ENCODE measurements at regions of chr11 and their contacts with region 1.

Region 1: DNA sequence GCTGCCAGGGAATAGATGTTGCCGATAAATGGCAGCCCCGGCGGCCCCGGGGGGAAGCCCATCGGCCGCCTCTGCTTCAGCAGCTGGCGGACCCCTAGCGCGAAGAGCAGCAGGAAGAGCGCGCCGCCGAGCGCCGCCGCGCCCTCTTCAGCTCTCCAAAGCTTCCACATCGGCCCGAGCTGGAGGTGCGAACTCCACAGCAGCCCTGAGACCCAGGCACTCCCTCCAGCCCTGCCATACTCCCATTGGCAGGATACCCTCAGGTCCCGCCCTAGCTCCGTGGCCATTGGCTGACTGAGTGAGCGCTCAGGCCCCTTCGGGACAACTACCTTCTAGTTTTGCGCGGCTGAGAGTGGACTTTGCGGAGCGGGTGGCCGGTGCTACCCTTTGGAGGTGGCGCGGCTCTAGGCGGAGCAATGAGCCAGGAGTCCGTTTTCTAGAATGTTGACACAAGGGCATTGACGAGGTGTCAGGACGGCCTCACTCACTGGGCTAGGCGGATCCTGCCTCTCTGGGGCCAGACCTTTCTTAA is at the start of gene CYP2R1:
- DNase-seq: peak; percentile 95
- H3K4me3 Mint-ChIP-seq: peak within 1 kb of the TSS; percentile 86
- H3K27ac Mint-ChIP-seq: peak within 1 kb of the TSS; percentile 98
- H3K4me1 Mint-ChIP-seq: peaks cover 52% of the 10 kb centered on the region
- H3K27me3 Mint-ChIP-seq: no peaks in the 10 kb centered on the region
- total RNA-seq, gene CYP2R1: 12.0 to 12.6 TPM

Region 2: DNA sequence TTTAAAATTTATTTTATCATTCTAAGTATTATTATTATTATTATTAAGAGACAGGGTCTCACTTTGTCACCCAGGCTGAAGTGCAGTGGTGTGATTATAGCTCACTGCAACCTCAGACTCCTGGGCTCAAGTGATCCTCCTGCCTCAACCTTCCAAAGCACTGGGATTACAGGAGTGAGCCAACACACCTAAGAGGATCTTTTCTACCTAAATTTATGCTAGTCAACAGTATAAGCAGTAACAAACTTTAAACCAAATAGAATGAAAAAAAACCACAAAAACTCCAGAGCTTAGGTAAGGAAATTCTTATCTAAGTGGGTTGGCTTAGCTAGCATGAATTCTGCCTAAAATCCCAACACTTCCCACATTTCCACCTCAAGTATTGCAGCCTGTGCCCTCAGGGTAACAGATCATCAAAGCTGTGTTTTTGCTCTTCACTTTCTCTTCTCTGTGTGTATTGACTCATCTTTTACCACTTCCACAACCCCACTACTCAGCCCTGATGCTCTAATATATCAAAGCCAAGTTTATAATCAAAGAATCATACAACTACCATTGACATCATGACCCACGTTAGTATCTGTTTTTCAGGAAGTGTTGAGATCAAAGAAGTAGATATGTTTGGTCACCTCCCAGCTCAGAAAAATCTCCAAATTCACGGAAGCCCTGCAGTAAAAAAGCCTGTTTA is 1023.2 kb before region 1 on chr11:
- CTCF ChIA-PET with region 1: no interaction called
- intact Hi-C with region 1: loop called (anchors 5 kb)
- DNase-seq: peak; percentile 61
- H3K4me3 Mint-ChIP-seq: peak overlapping the region; percentile 42
- H3K27ac Mint-ChIP-seq: peak overlapping the region; percentile 91
- H3K4me1 Mint-ChIP-seq: peaks cover 41% of the 10 kb centered on the region
- H3K27me3 Mint-ChIP-seq: no peaks in the 10 kb centered on the region

Region 3: GRCh38 chr11:14443638-14444037 is 448.5 kb before region 1 on chr11:
- CTCF ChIA-PET with region 1: no interaction called
- intact Hi-C with region 1: loop called (anchors 1 kb)
- DNase-seq: no peak
- H3K4me3 Mint-ChIP-seq: no peak overlapping the region
- H3K27ac Mint-ChIP-seq: no peak overlapping the region
- H3K4me1 Mint-ChIP-seq: peaks cover 46% of the 10 kb centered on the region
- H3K27me3 Mint-ChIP-seq: no peaks in the 10 kb centered on the region

Region 4: DNA sequence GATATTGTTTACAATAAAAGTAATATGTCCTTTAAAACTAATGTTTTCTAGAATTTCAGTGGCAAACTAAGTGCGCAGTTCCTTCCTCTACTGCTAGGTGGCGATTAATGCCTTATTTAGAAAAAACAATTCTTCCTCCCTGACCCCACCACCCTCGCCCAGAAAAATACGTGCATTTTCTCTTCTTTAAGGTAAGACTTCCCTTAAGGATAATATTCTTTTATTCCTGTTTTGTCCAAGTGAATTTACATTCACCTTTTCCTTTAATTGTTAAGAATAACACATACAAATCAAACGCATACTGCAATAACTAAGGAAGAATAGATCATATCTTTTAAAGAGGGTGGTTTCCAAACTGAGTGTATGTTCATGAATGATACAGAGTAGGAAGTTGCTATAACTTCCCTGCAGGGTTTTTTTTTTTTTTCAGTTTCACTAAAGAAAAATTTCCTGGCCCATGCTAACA is 354.9 kb before region 1 on chr11:
- CTCF ChIA-PET with region 1: interaction called, 3 read pairs
- intact Hi-C with region 1: loop called (anchors 1 kb)
- DNase-seq: peak; percentile 66
- H3K4me3 Mint-ChIP-seq: peak overlapping the region; percentile 68
- H3K27ac Mint-ChIP-seq: peak overlapping the region; percentile 90
- H3K4me1 Mint-ChIP-seq: peaks cover 32% of the 10 kb centered on the region
- H3K27me3 Mint-ChIP-seq: no peaks in the 10 kb centered on the region

Region 5: GRCh38 chr11:14643697-14644225 is 248.3 kb before region 1 on chr11 and contains the start of gene PDE3B:
- CTCF ChIA-PET with region 1: interaction called, 3 read pairs
- intact Hi-C with region 1: loop called (anchors 1 kb)
- DNase-seq: peak; percentile 85
- H3K4me3 Mint-ChIP-seq: peak within 1 kb of the TSS; percentile 81
- H3K27ac Mint-ChIP-seq: peak within 1 kb of the TSS; percentile 91
- H3K4me1 Mint-ChIP-seq: peaks cover 45% of the 10 kb centered on the region
- H3K27me3 Mint-ChIP-seq: no peaks in the 10 kb centered on the region
- total RNA-seq, gene PDE3B: 16.5 to 17.4 TPM

Region 6: DNA sequence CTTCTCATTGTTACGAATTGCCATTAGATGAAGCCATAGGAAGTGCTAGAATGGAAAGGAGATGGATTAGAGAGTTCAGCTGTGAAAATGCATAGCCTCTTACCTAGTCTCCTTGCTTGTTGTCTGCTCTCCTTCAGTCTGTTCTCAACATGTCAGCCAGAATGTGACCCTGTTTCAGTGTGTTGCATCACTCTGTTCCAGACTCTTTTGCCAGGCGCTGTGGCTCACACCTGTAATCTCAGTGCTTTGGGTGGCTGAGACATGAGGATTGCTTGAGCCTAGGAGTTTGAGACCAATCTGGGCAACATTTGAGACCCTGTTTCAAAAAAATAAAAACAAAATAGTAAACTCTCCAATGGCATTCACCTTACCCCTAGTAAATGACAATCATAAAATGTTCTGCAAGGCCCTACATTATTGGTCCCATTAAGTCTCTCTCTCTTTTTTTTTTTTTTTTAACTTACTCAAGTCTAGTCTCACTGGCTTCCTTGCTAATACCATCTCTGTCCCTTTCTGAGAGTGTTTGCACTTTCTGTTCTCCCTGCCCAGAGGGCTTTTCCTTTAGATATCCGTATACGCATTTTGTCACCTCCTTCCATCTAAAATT is 39.4 kb before region 1 on chr11:
- CTCF ChIA-PET with region 1: no interaction called
- intact Hi-C with region 1: loop called (anchors 2 kb)
- DNase-seq: peak; percentile 57
- H3K4me3 Mint-ChIP-seq: peak overlapping the region; percentile 30
- H3K27ac Mint-ChIP-seq: peak overlapping the region; percentile 80
- H3K4me1 Mint-ChIP-seq: peaks cover 31% of the 10 kb centered on the region
- H3K27me3 Mint-ChIP-seq: no peaks in the 10 kb centered on the region

Region 7: GRCh38 chr11:14942745-14943144 is 50.6 kb after region 1 on chr11:
- CTCF ChIA-PET with region 1: no interaction called
- intact Hi-C with region 1: no loop called
- DNase-seq: no peak
- H3K4me3 Mint-ChIP-seq: no peak overlapping the region
- H3K27ac Mint-ChIP-seq: no peak overlapping the region
- H3K4me1 Mint-ChIP-seq: no peaks in the 10 kb centered on the region
- H3K27me3 Mint-ChIP-seq: no peaks in the 10 kb centered on the region

Region 8: DNA sequence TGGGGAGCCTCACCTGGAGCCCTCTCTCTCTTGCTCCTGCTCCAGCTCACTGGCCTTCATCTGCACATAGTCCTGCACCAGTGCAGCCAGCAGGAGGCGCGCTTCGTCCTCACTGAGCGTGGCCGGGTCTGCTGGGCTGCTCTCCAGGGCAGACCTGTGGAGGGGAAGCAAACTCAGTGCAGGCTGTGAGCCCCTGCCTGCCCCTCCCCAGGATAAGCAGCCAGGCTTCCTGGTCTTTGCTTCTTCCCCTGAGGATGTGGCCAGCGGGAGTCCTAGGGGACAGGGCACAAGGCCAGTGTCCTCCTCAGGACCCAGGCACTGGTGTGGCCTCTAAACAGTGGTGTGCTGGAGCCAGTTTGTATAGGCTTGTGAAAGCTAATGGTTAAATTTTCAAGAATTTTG is 77.8 kb after region 1 on chr11:
- CTCF ChIA-PET with region 1: no interaction called
- intact Hi-C with region 1: no loop called
- DNase-seq: peak; percentile 82
- H3K4me3 Mint-ChIP-seq: no peak overlapping the region
- H3K27ac Mint-ChIP-seq: no peak overlapping the region
- H3K4me1 Mint-ChIP-seq: peaks cover 29% of the 10 kb centered on the region
- H3K27me3 Mint-ChIP-seq: peaks cover 60% of the 10 kb centered on the region

Region 9: DNA sequence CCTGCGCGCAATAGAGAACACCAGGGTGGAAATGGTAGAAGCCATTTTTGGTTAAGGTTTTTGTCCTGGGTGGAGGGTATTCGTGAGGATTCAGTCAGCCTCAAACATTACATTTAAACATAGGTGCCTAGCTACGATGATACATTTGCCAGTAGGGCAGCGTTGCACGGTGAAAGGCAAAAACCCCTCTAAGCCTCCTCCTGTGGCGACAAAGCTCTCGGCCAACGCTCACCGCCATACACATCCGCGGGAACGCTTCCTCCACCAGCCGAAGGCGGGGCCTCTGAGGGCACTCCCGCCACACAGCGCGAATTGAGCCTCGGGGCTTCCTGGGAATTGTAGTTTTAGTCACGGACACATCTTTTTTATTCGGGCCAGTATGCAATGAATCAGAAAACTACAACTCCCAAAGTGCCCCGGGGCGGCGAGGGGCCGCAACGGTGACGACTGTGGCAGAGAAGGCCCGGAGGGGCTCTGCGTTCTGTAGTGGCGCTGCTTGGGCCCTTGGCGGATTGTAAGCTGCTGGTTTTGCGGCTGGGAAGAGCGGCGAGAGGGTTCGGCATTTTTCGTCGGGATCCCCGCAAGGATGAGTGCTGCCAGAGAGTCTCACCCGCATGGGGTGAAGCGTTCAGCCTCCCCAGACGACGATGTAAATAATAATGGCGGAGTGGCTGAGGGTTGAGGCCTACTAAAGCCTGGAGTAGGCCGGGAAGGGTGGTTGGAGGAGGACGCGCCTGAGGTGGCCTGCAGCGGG is 1846.3 kb after region 1 on chr11 and contains the start of gene C11orf58:
- CTCF ChIA-PET with region 1: no interaction called
- intact Hi-C with region 1: loop called (anchors 1 kb)
- DNase-seq: peak; percentile 97
- H3K4me3 Mint-ChIP-seq: peak within 1 kb of the TSS; percentile 73
- H3K27ac Mint-ChIP-seq: peak within 1 kb of the TSS; percentile 85
- H3K4me1 Mint-ChIP-seq: peaks cover 22% of the 10 kb centered on the region
- H3K27me3 Mint-ChIP-seq: no peaks in the 10 kb centered on the region
- total RNA-seq, gene C11orf58: 114 to 123 TPM